Right ventricle myocardium inferior (tissue), 1 donor: ENCODE measurements at regions of chr10 and their contacts with region 1.

Region 1: DNA sequence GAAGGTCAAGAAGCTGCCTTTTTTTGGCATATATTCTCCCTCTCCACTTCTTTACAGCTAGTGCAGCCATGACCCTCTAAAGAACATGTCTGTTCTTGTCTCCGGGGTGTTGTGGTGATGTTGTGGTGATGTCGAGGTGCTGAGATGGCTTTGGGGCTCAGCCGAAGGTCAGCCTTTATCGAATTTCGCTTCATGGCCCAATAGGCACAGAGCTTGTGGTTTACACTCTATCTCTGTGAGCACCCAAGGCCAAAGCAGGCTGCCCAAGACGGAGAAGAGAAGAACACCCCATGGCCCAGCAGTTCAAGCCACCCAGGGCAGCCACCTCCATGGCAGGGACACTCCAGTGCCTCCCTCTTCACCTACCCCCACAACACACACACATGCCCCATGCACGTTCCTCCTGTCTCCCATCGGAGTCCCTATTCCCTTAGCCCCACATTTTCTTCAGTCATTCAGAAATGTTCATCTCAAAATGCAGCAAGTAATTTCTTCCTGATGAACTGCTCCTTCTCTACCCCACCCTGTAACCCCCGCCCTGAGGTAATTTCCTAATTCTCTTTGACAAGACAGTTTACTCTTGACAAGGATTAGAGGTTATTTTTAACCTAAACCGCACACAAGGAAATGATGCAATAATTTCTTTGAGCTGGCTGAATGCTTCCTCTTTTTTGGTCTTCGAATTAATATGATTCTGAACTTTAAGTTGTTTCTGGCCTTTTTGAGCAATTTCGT is 18.6 kb upstream of the ADRB1 start:
- DNase-seq: no peak
- ATAC-seq: peak; percentile 19

Region 2: DNA sequence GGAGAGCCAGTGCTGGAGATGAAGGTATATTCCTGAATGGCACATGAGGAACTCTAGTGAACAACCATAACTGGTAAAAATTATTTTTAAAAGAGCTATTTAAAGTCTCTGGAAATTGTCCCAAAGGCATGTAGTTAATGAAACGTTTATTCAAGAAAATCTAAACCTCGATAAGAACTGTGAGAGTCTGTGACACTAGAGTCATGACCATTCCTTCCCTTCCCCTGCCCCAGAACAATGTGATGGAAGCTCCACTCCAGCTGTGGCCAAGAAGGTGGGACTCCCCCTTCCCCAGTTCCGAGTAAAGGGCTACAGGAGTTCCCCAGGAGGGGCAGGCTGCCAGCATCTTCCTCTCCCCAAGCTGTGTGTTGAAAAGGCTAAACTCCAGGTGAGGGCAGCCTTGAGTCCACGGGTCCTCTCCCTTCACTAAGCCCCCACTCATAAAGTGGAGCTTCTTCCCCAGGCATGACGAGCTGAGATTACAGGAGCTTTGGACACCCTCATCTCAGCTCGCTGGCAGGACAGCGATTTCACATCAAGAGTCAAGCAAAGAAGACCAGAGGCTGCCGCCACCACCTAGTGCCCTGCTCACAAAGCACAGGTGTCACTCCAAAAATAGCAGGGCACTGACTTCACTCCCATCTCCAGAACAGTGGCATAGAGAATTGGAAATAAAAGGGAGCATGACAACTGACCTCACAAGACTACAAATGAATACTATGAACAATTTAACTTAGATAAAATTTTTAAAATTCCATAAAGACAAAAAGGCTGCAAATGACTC is 102.1 kb before region 1 on chr10:
- intact Hi-C with region 1: loop called (anchors 5 kb)
- DNase-seq: no peak
- ATAC-seq: peak; percentile 58

Region 3: GRCh38 chr10:113978802-113979201 is 46.2 kb before region 1 on chr10:
- intact Hi-C with region 1: loop called (anchors 2 kb)
- DNase-seq: peak; percentile 72
- ATAC-seq: peak; percentile 73

Region 4: DNA sequence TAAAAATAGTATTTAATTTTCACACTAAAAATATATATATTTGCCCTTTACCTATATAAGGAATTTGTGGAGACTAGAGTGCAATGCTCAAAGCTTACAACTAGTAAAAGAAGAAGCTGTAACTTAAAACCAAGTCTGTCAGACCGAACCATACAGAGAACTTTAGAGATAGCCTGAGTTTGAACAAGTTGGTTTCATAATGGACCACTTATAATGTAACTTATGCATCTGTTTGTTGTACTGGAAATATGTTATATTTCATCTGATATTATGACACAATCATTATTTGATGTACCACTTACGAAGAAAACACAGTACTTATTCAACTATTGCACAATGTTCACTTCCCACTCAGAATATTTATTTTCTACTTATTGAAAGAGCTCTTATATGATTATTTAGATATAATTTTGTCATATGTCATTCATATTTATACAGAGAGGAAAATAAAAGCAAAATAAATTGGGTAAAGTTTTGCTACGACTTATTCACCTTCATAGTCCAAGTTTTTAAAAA is 1530.9 kb after region 1 on chr10:
- intact Hi-C with region 1: no loop called
- DNase-seq: no peak
- ATAC-seq: no peak